Adrenal gland (tissue), 19 donors: ENCODE measurements at regions of chr2 and their contacts with region 1.

Region 1: DNA sequence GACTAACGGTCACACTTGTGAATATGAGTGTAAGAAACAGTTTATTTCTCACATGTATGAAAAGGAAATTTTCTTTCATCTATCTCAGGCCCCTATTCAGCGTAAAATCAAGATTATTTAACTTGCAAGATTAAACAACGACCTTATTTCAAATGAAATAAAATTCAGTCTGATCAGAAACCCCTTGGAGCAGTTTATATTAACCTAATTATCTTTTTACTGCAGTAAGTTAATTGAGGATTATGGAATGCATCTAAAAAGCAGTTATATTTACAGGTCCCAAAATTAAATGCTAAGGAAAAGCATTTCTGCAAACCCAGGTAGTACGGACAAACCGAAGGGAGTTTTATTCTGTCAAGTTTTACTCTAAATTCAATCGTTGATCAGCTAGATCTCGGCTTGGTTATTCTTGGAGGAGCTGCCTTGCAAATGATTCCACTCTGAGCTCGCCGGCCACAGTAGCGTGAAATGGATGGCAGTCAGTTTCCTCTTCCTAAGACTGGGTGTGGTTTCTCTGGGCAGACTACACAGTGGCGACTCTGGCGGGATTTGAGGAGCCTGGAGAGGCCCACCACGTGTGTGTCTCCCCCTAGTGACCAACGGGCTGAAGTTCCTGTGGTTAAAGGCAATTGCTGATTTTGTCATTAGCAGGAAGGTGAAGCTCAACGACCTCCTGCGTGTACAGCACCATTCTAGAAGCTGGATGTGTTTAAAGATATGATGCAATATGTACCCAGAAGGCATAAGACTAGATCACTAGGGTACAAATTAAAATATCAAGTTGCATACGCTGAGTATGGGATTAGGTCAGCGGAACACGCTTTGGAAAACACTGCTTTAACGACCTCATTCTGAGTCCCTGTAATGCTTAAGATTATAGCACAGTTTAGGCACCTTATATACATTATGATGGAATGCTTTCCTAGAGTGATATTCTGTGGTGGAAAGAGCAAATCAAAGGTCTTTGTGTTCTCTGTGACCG is 36.4 kb downstream of the PRKRA start:
- DNase-seq: peak; percentile 87 to 96 (median 93)
- H3K4me3 ChIP-seq: peak overlapping the region in 3 of 4 donors; percentile 69 to 83 (median 70)
- H3K27ac ChIP-seq: peak overlapping the region; percentile 63 to 93 (median 89)
- H3K4me1 ChIP-seq: peaks cover 0 to 15% of the 10 kb centered on the region in 2 donors
- H3K27me3 ChIP-seq: no peaks in the 10 kb centered on the region
- CTCF ChIP-seq: peak; percentile 75 to 91 (median 89)
- POLR2A ChIP-seq: peak in 1 of 2 donors; percentile 68

Region 2: GRCh38 chr2:178128836-178129630 is 285.5 kb before region 1 on chr2:
- intact Hi-C with region 1: loop called in 1 of 2 experiments (anchors 10 kb)
- DNase-seq: no peak
- H3K4me3 ChIP-seq: no peak overlapping the region
- H3K27ac ChIP-seq: peak overlapping the region in 1 of 5 donors; percentile 6
- H3K4me1 ChIP-seq: no peaks in the 10 kb centered on the region
- H3K27me3 ChIP-seq: no peaks in the 10 kb centered on the region
- CTCF ChIP-seq: no peak
- POLR2A ChIP-seq: no peak

Region 3: GRCh38 chr2:178306352-178307073 is 108.0 kb before region 1 on chr2:
- intact Hi-C with region 1: loop called in 1 of 2 experiments (anchors 5 kb)
- DNase-seq: peak; percentile 41 to 76 (median 51)
- H3K4me3 ChIP-seq: no peak overlapping the region
- H3K27ac ChIP-seq: no peak overlapping the region
- H3K4me1 ChIP-seq: no peaks in the 10 kb centered on the region
- H3K27me3 ChIP-seq: no peaks in the 10 kb centered on the region
- CTCF ChIP-seq: peak in 5 of 6 experiments; percentile 23 to 49 (median 45)
- POLR2A ChIP-seq: no peak